Activated B cell treated with CpG ODN at 0.5 μM for 24 hours (primary cell): ENCODE measurements at regions of chr6 and their contacts with region 1.

Region 1: GRCh38 chr6:132512638-132513632 is at the start of gene STX7:
- DNase-seq: peak; percentile 89
- ATAC-seq: peak; percentile 82
- H3K4me3 Mint-ChIP-seq: peak within 1 kb of the TSS; percentile 96
- H3K27ac Mint-ChIP-seq: peak within 1 kb of the TSS; percentile 97
- H3K4me1 Mint-ChIP-seq: peaks cover 68% of the 10 kb centered on the region
- H3K27me3 Mint-ChIP-seq: no peaks in the 10 kb centered on the region
- CTCF ChIP-seq: no peak
- total RNA-seq, gene STX7: 109 and 138 TPM in 2 replicates

Region 2: GRCh38 chr6:131627724-131628682 is 884.9 kb before region 1 on chr6 and contains the start of gene MED23:
- CTCF ChIA-PET with region 1: no interaction called
- POLR2A ChIA-PET with region 1: no interaction called
- intact Hi-C with region 1: loop called (anchors 5 kb)
- DNase-seq: peak; percentile 98
- ATAC-seq: peak; percentile 95
- H3K4me3 Mint-ChIP-seq: peak within 1 kb of the TSS; percentile 99
- H3K27ac Mint-ChIP-seq: peak within 1 kb of the TSS; percentile 94
- H3K4me1 Mint-ChIP-seq: peaks cover 31% of the 10 kb centered on the region
- H3K27me3 Mint-ChIP-seq: no peaks in the 10 kb centered on the region
- CTCF ChIP-seq: peak; percentile 62
- total RNA-seq, gene MED23: 45.3 and 51.0 TPM in 2 replicates

Region 3: DNA sequence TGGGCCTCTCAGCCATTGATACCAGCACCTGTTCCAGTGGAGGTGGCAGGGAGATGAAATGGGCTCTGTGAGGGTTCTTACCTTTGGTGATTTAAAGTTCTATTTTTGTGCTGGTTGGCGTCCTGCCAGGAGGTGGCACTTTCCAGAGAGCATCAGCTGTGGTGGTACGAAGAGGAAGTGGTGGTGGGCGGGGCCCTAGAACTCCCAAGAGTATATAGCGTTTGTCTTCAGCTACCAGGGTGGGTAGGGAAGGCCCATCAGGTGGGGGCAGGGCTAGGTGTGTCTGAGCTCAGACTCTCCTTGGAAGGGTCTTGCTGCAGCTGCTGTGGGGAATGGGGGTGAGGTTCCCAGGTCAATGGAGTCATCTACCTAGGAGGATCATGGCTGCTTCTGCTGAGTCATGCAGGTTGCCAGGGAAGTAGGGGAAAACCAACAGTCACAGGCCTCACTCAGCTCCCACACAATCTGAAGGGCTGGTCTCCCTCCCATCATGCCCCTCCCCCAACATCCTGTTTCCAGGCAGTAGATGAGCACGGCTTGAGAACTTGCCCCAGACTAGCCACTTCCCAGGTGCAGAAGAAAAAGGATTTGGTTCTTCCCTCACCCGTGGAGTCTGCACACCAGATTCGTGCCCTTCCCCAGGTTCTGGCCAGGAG is 158.3 kb before region 1 on chr6:
- CTCF ChIA-PET with region 1: interaction called, 3 read pairs
- POLR2A ChIA-PET with region 1: interaction called, 8 read pairs
- intact Hi-C with region 1: loop called (anchors 1 kb)
- DNase-seq: peak; percentile 80
- ATAC-seq: peak; percentile 92
- H3K4me3 Mint-ChIP-seq: peak overlapping the region; percentile 77
- H3K27ac Mint-ChIP-seq: peak overlapping the region; percentile 92
- H3K4me1 Mint-ChIP-seq: peaks cover 74% of the 10 kb centered on the region
- H3K27me3 Mint-ChIP-seq: no peaks in the 10 kb centered on the region
- CTCF ChIP-seq: no peak

Region 4: GRCh38 chr6:132498638-132499037 is 14.3 kb before region 1 on chr6:
- CTCF ChIA-PET with region 1: interaction called, 9 read pairs
- POLR2A ChIA-PET with region 1: interaction called, 78 read pairs
- intact Hi-C with region 1: loop called (anchors 1 kb)
- DNase-seq: no peak
- ATAC-seq: peak; percentile 67
- H3K4me3 Mint-ChIP-seq: peak overlapping the region; percentile 55
- H3K27ac Mint-ChIP-seq: peak overlapping the region; percentile 92
- H3K4me1 Mint-ChIP-seq: peaks cover 90% of the 10 kb centered on the region
- H3K27me3 Mint-ChIP-seq: no peaks in the 10 kb centered on the region
- CTCF ChIP-seq: no peak

Region 5: GRCh38 chr6:132648356-132649227 is 135.7 kb after region 1 on chr6:
- CTCF ChIA-PET with region 1: no interaction called
- POLR2A ChIA-PET with region 1: no interaction called
- intact Hi-C with region 1: no loop called
- DNase-seq: no peak
- ATAC-seq: no peak
- H3K4me3 Mint-ChIP-seq: no peak overlapping the region
- H3K27ac Mint-ChIP-seq: no peak overlapping the region
- H3K4me1 Mint-ChIP-seq: peaks cover 2% of the 10 kb centered on the region
- H3K27me3 Mint-ChIP-seq: no peaks in the 10 kb centered on the region
- CTCF ChIP-seq: no peak

Region 6: DNA sequence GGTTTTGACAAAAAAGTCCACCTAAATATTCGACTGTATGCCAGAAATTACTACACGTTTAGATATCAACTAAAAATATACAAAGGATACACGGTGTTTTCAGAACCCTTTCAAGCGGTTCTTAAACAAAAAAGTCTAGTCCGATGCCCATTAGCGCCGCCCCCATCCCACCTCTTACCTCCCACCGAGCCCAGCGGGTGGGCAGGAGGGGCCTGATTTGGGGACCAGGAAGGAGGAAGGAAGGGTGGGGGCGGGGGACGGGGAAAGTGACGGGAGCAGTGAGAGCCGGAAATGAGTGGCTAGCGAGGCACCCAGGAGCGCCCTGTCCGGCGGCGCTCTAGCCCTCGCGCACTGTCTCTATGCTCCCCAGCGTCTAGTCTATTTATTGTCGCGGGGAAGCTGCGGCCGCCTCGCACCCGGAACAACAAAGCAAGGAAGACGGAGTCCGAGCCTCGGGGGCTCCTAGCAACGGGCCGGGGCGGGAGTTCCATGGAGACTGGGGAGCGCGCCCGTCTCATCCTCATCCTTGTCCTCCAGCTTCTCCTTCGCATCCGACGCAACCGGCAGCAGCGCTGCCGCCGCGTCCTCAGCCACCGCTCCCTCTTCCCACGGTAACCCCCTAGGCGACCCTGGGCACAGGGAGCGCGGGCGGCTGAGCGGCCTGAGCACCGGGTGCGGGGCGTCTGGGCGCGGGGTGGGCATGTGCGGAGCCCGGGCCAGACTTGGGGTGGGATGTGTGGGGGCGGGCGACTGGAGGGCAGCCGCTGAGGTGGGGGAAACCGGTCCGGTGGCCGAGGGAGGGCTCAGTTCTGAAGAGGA is 1440.1 kb after region 1 on chr6 and contains the start of gene TBPL1:
- CTCF ChIA-PET with region 1: no interaction called
- POLR2A ChIA-PET with region 1: interaction called, 4 read pairs
- intact Hi-C with region 1: loop called (anchors 1 kb)
- DNase-seq: peak; percentile 83
- ATAC-seq: peak; percentile 84
- H3K4me3 Mint-ChIP-seq: peak within 1 kb of the TSS; percentile 95
- H3K27ac Mint-ChIP-seq: peak within 1 kb of the TSS; percentile 98
- H3K4me1 Mint-ChIP-seq: peaks cover 53% of the 10 kb centered on the region
- H3K27me3 Mint-ChIP-seq: no peaks in the 10 kb centered on the region
- CTCF ChIP-seq: no peak
- total RNA-seq, gene TBPL1: 33.0 and 35.7 TPM in 2 replicates